HEK293 (cell line): ENCODE measurements at regions of chr5 and their contacts with region 1.

Region 1: DNA sequence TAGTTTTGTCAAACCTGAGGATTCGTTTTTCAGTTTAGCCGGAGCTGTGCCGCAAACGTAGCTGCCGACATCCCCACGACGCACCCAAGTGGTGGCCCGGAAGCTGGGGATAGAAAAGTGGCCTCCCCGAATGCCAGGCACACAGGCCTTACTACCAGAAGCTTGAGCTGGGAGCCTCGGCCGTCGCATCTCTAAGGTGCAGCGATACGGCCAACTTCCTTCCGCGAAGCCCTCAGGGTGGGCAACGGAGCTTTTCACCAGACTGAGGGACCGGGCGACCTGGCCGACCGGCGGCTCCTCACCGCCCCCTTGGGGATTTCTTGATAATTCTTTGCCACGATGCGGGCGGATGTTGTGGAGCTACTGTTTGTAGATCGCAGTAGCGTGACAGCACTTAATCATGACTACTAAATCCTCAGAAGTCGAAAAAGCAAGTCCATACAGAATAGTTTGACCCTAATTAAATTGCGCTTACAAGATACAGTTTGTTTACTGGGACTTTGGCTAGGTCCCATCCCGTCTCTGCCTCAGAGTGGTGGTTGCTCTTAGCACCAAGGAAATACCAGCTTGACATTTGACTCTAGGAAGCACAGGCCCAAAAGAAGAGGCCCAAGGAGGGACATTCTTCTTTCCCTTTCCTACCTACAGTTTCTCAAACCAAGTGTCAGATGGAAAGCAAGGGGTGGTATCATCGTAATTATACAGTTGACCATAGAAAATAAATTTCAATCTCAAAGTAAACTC is 613 bp upstream of the TMEM267 start:
- H3K4me3 ChIP-seq: peak overlapping the region; percentile 81
- H3K27ac ChIP-seq: peak overlapping the region; percentile 87
- H3K4me1 ChIP-seq: peaks cover 4% of the 10 kb centered on the region; the same call in 1 of the 2 replicates
- CTCF ChIP-seq: peak; percentile 91

Region 2: GRCh38 chr5:43305948-43306565 is 178.2 kb before region 1 on chr5:
- CTCF ChIA-PET with region 1: interaction called, 10 read pairs
- POLR2A ChIA-PET with region 1: interaction called, 43 read pairs
- H3K4me3 ChIP-seq: no peak overlapping the region
- H3K27ac ChIP-seq: no peak overlapping the region
- H3K4me1 ChIP-seq: peaks cover 27% of the 10 kb centered on the region
- CTCF ChIP-seq: peak; percentile 56; the same call in 1 of the 2 replicates

Region 3: GRCh38 chr5:43401827-43402226 is 82.5 kb before region 1 on chr5:
- CTCF ChIA-PET with region 1: interaction called, 47 read pairs
- POLR2A ChIA-PET with region 1: interaction called, 16 read pairs
- H3K4me3 ChIP-seq: no peak overlapping the region
- H3K27ac ChIP-seq: no peak overlapping the region
- H3K4me1 ChIP-seq: no peaks in the 10 kb centered on the region
- CTCF ChIP-seq: no peak; the same call in 1 of the 2 replicates

Region 4: DNA sequence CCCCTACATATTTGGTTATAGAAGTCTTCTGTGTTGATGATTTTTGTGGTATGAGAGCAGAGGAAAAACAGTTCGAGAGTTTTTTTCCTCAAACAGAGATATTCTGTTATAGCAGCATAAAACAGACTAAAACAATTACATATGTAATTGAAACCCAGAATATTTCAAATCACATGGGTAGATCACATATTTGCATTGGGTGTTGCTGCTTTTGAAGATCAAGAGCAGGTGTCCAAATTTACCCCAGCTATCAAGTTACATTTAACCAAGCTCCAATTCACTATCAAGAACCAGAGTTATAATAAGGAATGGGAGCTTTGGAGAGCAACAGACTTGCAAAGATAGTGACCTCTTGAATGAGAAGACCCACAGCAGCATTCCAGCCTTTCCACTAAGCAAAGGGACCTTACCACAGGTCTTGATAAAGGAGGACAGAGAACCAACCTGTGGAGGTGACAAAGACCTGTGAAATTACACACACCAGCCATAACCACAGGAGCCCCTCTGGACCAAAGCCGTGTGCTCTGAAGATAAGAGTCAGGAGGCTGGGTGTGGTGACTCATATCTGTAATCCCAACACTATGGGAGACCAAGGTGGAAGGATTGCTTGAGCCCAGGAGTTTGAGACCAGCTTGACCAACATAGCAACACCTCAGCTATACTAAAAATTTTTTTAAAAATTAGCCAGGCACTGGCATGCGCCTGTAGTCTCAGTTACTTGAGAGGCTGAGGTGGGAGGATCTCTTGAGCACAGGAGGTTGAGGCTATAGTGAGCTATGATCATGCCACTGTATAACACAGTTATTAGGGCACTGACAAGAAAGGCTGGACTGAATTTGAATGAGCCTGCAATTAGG is 68.1 kb before region 1 on chr5:
- CTCF ChIA-PET with region 1: interaction called, 12 read pairs
- POLR2A ChIA-PET with region 1: interaction called, 14 read pairs
- H3K4me3 ChIP-seq: no peak overlapping the region
- H3K27ac ChIP-seq: no peak overlapping the region
- H3K4me1 ChIP-seq: peaks cover 9% of the 10 kb centered on the region
- CTCF ChIP-seq: no peak

Region 5: DNA sequence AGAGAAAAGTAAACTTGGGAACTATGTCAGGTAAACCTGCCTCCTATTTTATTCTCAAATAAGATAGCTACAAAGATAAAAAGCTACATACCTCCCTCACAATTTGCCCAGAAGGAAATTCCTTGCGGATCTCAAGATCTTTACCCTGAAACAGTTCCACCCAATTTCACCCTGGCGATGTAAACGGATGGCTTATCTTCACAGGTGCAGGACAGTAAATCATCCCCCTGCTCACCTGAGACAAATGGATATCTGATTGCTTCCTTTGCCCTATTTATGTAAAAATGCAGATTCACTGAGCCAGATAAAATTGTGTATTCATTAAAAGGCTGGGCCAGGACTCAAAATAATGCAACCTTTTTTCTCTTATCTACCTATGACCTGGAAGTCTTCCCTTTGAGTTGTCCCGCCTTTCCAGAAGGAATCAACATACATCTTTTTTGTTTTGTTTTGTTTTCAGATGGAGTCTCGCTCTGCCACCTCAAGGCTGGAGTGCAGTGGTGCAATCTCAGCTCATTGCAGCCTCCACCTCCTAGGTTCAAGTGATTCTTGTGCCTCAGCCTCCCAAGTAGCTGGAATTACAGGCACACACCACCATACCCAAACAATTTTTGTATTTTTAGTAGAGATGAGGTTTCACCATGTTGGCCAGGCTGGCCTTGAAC is 14.4 kb before region 1 on chr5:
- CTCF ChIA-PET with region 1: interaction called, 21 read pairs
- POLR2A ChIA-PET with region 1: interaction called, 6 read pairs
- H3K4me3 ChIP-seq: no peak overlapping the region
- H3K27ac ChIP-seq: no peak overlapping the region
- H3K4me1 ChIP-seq: no peaks in the 10 kb centered on the region
- CTCF ChIP-seq: no peak

Region 6: GRCh38 chr5:43514816-43515677 is 30.8 kb after region 1 on chr5 and contains the start of gene C5orf34:
- CTCF ChIA-PET with region 1: interaction called, 7 read pairs
- POLR2A ChIA-PET with region 1: interaction called, 39 read pairs
- H3K4me3 ChIP-seq: peak within 1 kb of the TSS; percentile 84
- H3K27ac ChIP-seq: peak within 1 kb of the TSS; percentile 81
- H3K4me1 ChIP-seq: peaks cover 5% of the 10 kb centered on the region; the same call in 1 of the 2 replicates
- CTCF ChIP-seq: peak; percentile 79

Region 7: DNA sequence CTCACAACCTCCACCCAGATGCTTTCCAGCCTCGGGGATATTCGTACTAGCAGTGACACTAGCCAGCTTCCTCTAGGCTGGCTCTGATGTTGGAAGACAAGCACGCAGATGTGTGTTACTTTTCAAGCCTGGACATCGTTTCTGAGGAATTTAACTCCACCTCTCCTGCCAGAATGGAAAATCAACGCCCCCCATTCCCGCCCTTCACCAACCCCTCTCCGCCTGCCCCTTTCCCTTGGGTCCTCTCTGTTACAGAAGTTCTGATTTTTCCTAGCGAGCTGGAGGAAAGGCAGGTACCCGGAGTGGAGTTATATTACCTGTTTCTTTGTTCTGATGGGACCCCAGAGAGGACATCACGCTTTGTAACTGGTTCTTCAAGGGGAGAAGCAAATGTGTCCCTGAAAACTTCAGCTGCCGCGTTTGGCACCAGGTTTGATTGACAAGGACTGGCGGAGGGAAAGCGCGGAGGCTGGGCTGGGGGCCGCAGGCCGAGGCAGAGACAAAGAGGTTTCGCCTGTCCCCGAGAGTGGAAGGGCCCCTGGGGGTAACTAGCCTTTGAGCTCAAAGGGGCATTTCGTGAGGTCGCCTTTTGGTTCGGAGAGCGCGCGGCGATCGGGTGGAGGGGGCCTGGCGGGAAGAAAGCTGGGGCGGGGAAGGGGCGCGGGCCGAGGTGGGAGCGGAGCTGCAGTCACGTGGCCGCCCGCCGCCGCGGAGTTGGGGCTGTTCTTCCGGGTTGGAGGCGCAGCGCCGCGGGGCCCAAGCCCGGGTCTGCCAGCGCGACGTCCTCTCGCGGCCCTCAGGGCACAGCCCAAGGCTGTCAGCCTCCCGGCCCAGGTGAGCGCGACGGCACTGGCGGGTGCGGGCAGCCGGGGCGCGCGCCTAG is 118.4 kb after region 1 on chr5 and contains the start of gene NNT:
- CTCF ChIA-PET with region 1: interaction called, 4 read pairs
- POLR2A ChIA-PET with region 1: interaction called, 23 read pairs
- H3K4me3 ChIP-seq: peak within 1 kb of the TSS; percentile 90
- H3K27ac ChIP-seq: peak within 1 kb of the TSS; percentile 82
- H3K4me1 ChIP-seq: peaks cover 20% of the 10 kb centered on the region
- CTCF ChIP-seq: no peak